ENCODE measurements at regions of chr12 and their contacts with region 1.

Region 1: DNA sequence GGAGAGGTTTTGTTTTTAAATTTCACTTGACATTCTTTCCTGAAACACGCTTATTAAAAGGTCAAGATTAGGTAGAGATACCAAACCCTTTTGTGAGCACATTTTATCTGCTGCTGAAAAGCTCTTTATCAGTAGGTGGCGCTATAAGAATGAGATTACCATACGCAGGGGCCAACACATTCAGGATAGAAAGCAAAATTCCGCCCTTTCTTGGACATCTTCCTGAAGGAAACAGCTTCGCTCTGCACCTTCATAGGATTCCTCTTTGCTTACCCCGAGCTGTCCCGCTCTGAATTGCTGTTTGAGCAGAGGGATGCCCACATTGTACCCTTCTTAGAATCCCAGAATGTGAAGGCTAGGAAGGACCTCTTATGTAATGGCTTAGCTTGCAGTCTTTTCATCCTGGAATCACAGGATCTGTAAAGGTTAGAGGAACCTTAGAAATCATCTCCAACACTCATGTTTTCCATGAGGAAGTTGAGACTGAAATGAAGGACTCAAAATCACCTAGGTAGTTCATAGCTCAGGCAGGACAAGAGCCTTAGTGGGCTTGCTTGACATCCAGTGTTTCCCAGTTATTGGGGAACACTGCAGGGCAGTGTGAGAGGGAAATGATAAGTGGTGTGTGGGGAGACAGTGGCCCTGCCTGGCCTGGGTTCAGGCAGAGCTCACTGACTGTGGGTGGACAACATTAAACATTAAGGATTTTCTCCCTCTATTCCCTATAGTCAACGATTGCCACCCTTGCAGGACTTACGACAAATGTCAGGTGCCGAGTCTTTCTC is 38.7 kb upstream of the CRY1 start:
- DNase-seq: no peak
- ATAC-seq: peak; percentile 52
- H3K4me3 Mint-ChIP-seq: no peak overlapping the region
- H3K27ac Mint-ChIP-seq: no peak overlapping the region
- H3K4me1 Mint-ChIP-seq: peaks cover 34% of the 10 kb centered on the region
- H3K27me3 Mint-ChIP-seq: peaks cover 6% of the 10 kb centered on the region; the same call in 1 of the 2 replicates
- CTCF ChIP-seq: peak; percentile 37; the same call in 1 of the 2 replicates

Region 2: DNA sequence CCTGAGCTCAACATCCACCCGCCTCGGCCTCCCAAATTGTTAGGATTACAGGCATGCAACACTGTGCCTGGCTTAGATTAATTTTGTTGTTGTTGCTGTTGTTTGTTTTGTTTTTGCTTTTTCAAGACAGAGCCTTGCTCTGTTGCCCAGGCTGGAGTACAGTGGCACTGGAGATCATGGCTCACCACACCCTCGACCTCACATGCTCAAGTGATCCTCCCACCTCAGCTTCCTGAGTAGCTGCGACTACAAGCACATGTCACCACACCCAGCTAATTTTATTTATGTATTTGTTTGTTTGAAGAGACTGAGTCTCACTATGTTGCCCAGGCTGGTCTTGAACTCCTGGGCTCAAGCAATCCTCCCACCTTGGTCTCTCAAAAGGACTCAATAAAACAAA is 65.3 kb before region 1 on chr12:
- CTCF ChIA-PET with region 1: no interaction called
- POLR2A ChIA-PET with region 1: no interaction called
- DNase-seq: no peak
- ATAC-seq: no peak
- H3K4me3 Mint-ChIP-seq: no peak overlapping the region
- H3K27ac Mint-ChIP-seq: no peak overlapping the region
- H3K4me1 Mint-ChIP-seq: no peaks in the 10 kb centered on the region
- H3K27me3 Mint-ChIP-seq: no peaks in the 10 kb centered on the region
- CTCF ChIP-seq: no peak

Region 3: GRCh38 chr12:107317751-107318613 is 186.0 kb after region 1 on chr12:
- CTCF ChIA-PET with region 1: interaction called, 37 read pairs
- POLR2A ChIA-PET with region 1: no interaction called
- DNase-seq: peak; percentile 96
- ATAC-seq: peak; percentile 84
- H3K4me3 Mint-ChIP-seq: peak overlapping the region; percentile 96
- H3K27ac Mint-ChIP-seq: peak overlapping the region; percentile 89; the same call in 1 of the 2 replicates
- H3K4me1 Mint-ChIP-seq: peaks cover 30% of the 10 kb centered on the region
- H3K27me3 Mint-ChIP-seq: peaks cover 79% of the 10 kb centered on the region
- CTCF ChIP-seq: no peak